Transverse colon (tissue), 4 donors: ENCODE measurements at regions of chr4 and their contacts with region 1.

Region 1: DNA sequence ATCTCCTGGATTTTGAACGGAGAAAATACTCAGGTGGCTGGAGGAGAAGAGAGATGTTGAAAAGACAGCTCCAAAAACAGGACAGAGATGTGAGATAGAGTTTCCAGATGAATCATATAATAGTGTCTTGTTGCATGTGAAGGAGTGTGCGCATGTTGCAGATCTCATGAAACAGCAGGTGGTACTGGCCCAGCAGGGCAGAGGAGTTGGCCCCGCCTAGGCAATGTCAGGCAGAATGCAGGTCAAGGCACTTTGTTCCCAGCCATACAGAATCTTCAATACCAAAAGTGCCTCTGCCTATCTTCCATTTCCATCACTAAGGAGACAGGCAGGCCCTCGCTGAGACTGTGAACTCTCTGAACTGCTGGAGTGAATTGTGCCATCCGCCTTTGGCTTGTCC is 63.9 kb upstream of the FAT1 start:
- DNase-seq: no peak
- H3K4me3 ChIP-seq: no peak overlapping the region
- H3K27ac ChIP-seq: no peak overlapping the region
- H3K4me1 ChIP-seq: no peaks in the 10 kb centered on the region
- H3K27me3 ChIP-seq: no peaks in the 10 kb centered on the region
- CTCF ChIP-seq: no peak
- EP300 ChIP-seq: no peak
- POLR2A ChIP-seq: no peak

Region 2: DNA sequence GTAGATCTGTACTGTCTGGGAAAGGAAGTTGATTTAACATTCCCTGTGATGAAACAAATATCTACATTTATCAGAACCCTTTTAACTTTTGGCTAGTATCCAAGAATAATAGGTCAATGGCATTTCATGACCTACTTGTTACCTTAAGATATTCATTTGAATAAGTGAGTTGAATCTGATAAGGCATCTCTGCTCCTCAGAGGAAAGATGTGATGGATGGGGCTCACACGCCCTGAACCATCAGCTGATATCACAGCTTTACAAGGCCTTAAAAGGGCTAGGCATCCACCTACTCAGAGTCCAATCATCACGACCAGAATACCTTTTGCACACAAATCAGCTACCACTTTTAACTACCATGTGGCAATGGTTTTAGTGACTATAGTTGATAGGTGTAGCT is 1162.0 kb before region 1 on chr4:
- in situ Hi-C with region 1: no loop called
- intact Hi-C with region 1: no loop called
- DNase-seq: no peak
- H3K4me3 ChIP-seq: no peak overlapping the region
- H3K27ac ChIP-seq: no peak overlapping the region
- H3K4me1 ChIP-seq: no peaks in the 10 kb centered on the region
- H3K27me3 ChIP-seq: no peaks in the 10 kb centered on the region
- CTCF ChIP-seq: no peak
- EP300 ChIP-seq: no peak
- POLR2A ChIP-seq: no peak

Region 3: DNA sequence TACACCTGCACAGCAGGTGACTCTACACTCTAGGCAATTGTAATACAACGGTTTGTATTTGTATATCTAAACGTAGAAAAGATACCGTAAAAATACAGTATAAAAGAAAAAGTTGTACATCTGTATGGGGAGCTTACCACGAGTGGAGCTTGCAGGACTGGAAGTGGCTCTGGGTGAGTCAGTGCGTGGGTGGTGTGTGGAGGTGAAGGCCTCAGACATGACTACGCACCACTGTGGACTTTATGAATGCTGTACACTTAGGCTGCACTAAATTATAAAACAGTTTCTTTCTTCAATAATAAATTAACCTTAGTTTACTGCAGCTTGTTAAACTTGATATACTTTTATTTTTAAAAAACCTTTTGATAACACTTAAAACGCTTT is 21.1 kb after region 1 on chr4:
- in situ Hi-C with region 1: no loop called
- intact Hi-C with region 1: no loop called
- DNase-seq: no peak
- H3K4me3 ChIP-seq: no peak overlapping the region
- H3K27ac ChIP-seq: no peak overlapping the region
- H3K4me1 ChIP-seq: peaks cover 0 to 17% (median 0%) of the 10 kb centered on the region in 4 donors
- H3K27me3 ChIP-seq: no peaks in the 10 kb centered on the region
- CTCF ChIP-seq: no peak
- EP300 ChIP-seq: no peak
- POLR2A ChIP-seq: no peak

Region 4: DNA sequence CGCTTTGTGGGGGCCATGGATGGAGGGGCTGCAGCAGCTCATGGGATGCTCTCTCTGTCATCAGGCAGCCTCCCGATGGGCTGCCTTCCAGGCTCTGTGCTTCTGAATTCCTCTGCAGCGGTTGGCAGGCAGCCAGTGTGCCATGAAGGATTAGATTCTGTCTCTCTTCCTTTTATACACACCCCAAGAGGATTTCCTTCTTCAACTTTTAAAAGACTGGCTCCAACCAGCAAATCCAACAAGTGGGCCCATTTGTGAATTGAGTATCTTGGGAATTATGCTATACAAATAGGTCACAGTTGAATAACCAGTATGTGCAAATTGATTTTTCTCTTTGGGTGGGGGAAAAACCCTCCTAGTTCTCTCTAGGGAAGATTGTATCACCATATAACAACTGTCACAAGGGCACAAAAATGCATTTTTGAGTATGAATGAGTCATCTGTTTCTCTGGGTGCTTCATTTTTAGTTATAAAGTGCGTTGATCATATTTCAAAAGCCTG is 32.9 kb after region 1 on chr4:
- in situ Hi-C with region 1: no loop called
- intact Hi-C with region 1: loop called (anchors 1 kb)
- DNase-seq: peak; percentile 68
- H3K4me3 ChIP-seq: no peak overlapping the region
- H3K27ac ChIP-seq: peak overlapping the region; percentile 5 to 55 (median 35)
- H3K4me1 ChIP-seq: peaks cover 0 to 26% (median 19%) of the 10 kb centered on the region in 4 donors
- H3K27me3 ChIP-seq: no peaks in the 10 kb centered on the region
- CTCF ChIP-seq: no peak
- EP300 ChIP-seq: no peak
- POLR2A ChIP-seq: no peak